Activated T-helper 2 cell treated with anti-CD3 and anti-CD28 coated beads, Interferon-gamma antibody, Interleukin-2, Interleukin-4, amounts not matched to agents 10 μg/mL and 5 μg/mL and 100 μg/mL, durations not matched to agents 14 hours and 24 hours and 36 hours (primary cell): ENCODE measurements at regions of chr3 and their contacts with region 1.

Region 1: GRCh38 chr3:193572426-193572908 is 17.8 kb upstream of the ATP13A4 start:
- DNase-seq: peak; percentile 25
- H3K4me3 Mint-ChIP-seq: no peak overlapping the region
- H3K27ac Mint-ChIP-seq: no peak overlapping the region
- H3K4me1 Mint-ChIP-seq: peaks cover 2% of the 10 kb centered on the region
- H3K27me3 Mint-ChIP-seq: peaks cover 2% of the 10 kb centered on the region

Region 2: DNA sequence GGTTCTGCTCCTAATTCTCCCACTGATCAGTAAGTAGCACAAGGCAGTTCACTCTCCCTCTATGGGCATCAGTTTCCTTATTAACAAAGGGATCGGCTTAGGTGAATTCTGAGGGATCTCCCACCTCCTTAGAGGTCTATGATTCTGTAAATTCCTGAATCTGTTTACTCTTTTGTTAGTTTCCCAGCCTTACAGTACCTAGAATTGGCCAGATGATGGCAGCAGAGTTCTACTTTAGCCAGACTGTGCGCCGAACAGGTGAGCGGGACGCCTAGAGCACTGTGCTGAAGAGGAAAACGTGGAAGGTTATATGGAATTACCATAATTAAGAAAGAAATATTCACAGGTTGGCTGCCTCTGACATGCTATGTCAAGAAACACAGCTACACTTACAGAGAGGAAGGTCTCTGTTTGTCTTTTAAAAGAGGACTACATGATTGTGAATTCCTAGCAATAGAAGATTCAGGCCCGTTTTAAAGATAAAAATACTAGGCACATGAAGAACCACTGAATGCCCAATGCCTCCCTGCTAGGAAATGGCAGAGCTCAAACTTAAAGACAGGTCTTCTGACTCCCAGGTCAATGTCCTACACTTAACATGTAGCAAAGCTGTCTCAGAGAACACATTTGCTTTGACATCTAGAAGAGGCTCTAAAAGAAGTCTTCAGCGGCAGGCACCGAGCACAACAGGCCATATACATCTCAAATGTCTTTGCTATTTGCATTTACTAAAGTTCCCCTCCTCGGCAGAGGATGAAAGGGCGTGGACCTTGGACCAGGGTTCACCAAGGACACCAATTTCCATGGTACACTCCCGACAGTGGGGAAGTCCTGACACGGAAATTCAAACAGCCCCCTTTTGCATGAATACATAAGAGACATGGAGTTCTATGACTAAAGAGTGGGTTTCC is 1105.0 kb before region 1 on chr3:
- intact Hi-C with region 1: loop called (anchors 5 kb)
- DNase-seq: no peak
- H3K4me3 Mint-ChIP-seq: no peak overlapping the region
- H3K27ac Mint-ChIP-seq: no peak overlapping the region
- H3K4me1 Mint-ChIP-seq: peaks cover 2% of the 10 kb centered on the region
- H3K27me3 Mint-ChIP-seq: peaks cover 8% of the 10 kb centered on the region

Region 3: DNA sequence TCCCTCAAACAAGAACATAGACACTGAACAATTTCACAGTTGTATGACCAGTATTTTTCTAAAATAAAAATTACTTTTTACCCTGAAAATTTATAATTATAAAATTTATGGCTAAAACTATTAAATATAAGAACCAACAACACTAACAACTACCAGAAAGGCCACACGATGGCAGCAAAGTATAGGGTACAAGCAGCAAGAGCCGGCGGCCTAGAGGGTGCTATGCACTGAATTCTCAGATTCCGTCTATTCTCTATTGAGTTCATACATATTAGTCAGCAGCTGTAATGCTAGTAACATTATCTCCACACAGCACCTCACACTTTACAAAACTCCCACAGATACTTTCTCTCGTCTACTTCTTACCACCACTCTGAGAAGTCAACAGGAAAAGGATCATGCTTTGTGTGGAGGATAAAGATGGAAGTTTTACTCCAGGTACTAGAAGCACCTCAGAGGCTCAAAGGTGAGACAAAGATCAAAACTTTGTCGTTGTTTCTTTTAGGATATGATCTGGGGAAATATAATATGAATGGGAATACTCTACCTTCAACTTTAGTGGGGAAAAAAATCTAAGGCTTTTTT is 1005.7 kb before region 1 on chr3:
- intact Hi-C with region 1: loop called (anchors 5 kb)
- DNase-seq: peak; percentile 31
- H3K4me3 Mint-ChIP-seq: no peak overlapping the region
- H3K27ac Mint-ChIP-seq: no peak overlapping the region
- H3K4me1 Mint-ChIP-seq: no peaks in the 10 kb centered on the region
- H3K27me3 Mint-ChIP-seq: peaks cover 11% of the 10 kb centered on the region

Region 4: GRCh38 chr3:193465992-193466608 is 106.4 kb before region 1 on chr3:
- intact Hi-C with region 1: loop called (anchors 1 kb)
- DNase-seq: no peak
- H3K4me3 Mint-ChIP-seq: no peak overlapping the region
- H3K27ac Mint-ChIP-seq: no peak overlapping the region
- H3K4me1 Mint-ChIP-seq: peaks cover 4% of the 10 kb centered on the region
- H3K27me3 Mint-ChIP-seq: no peaks in the 10 kb centered on the region

Region 5: DNA sequence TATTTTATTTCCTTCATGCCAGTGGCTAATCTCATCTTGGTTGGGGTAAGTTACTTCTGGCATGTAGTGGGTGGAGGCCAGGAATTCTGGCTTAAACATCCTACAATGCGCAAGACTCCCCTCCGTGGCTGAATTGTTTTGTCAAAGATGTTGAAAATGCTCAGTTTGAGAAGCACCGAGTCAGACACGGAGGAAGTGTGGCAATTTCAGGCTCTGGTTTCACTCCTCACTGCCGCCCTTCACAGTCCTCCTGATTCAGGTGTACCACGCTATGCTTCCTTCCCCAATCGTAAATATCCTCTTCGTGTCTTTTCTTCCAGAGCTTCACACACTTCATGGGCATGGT is 171.2 kb after region 1 on chr3:
- intact Hi-C with region 1: no loop called
- DNase-seq: no peak
- H3K4me3 Mint-ChIP-seq: no peak overlapping the region
- H3K27ac Mint-ChIP-seq: no peak overlapping the region
- H3K4me1 Mint-ChIP-seq: peaks cover 6% of the 10 kb centered on the region
- H3K27me3 Mint-ChIP-seq: peaks cover 18% of the 10 kb centered on the region